ENCODE measurements at regions of chr19 and their contacts with region 1.

Region 1: GRCh38 chr19:33040994-33041827 is 23.5 kb downstream of the RHPN2 start:
- DNase-seq: peak in 1 of 2 donors; percentile 80
- H3K4me3 ChIP-seq: no peak overlapping the region
- H3K27ac ChIP-seq: peak overlapping the region; percentile 83 to 85
- H3K4me1 ChIP-seq: no peaks in the 10 kb centered on the region
- H3K27me3 ChIP-seq: no peaks in the 10 kb centered on the region
- CTCF ChIP-seq: no peak
- POLR2A ChIP-seq: no peak

Region 2: GRCh38 chr19:32287811-32288227 is 753.4 kb before region 1 on chr19:
- intact Hi-C with region 1: loop called (anchors 10 kb)
- DNase-seq: peak in 1 of 2 donors; percentile 21
- H3K4me3 ChIP-seq: peak overlapping the region in 1 of 3 donors; percentile 19
- H3K27ac ChIP-seq: peak overlapping the region in 1 of 2 donors; percentile 25
- H3K4me1 ChIP-seq: no peaks in the 10 kb centered on the region
- H3K27me3 ChIP-seq: no peaks in the 10 kb centered on the region
- CTCF ChIP-seq: peak in 2 of 3 donors; percentile 23 to 25
- POLR2A ChIP-seq: no peak

Region 3: GRCh38 chr19:34057155-34057554 is 1015.9 kb after region 1 on chr19:
- intact Hi-C with region 1: loop called (anchors 5 kb)
- DNase-seq: no peak
- H3K4me3 ChIP-seq: no peak overlapping the region
- H3K27ac ChIP-seq: no peak overlapping the region
- H3K4me1 ChIP-seq: no peaks in the 10 kb centered on the region
- H3K27me3 ChIP-seq: peaks cover 0 to 9% of the 10 kb centered on the region in 2 donors
- CTCF ChIP-seq: no peak
- POLR2A ChIP-seq: no peak

Measured in breast epithelium (tissue), 4 donors.